ENCODE measurements at regions of chr3 and their contacts with region 1.

Region 1: GRCh38 chr3:36876181-36876936 is 68.5 kb downstream of the TRANK1 start:
- DNase-seq: peak in 4 of 9 experiments; percentile 33 to 88 (median 67)
- ATAC-seq: peak; percentile 91
- H3K4me3 ChIP-seq: peak overlapping the region; percentile 5 to 32
- H3K4me3 Mint-ChIP-seq: peak overlapping the region; percentile 73
- H3K27ac ChIP-seq: peak overlapping the region; percentile 77 to 91
- H3K27ac Mint-ChIP-seq: peak overlapping the region; percentile 97
- H3K4me1 ChIP-seq: peaks cover 42% of the 10 kb centered on the region
- H3K4me1 Mint-ChIP-seq: peaks cover 55% of the 10 kb centered on the region
- H3K27me3 ChIP-seq: no peaks in the 10 kb centered on the region
- H3K27me3 Mint-ChIP-seq: no peaks in the 10 kb centered on the region
- CTCF ChIP-seq: no peak

Region 2: GRCh38 chr3:36993326-36994283 is 117.2 kb after region 1 on chr3 and contains the start of gene MLH1:
- CTCF ChIA-PET with region 1: interaction called, 3 read pairs
- POLR2A ChIA-PET with region 1: interaction called, 11 read pairs
- intact Hi-C with region 1: loop called (anchors 5 kb)
- DNase-seq: peak in 8 of 9 experiments; percentile 95 to 100 (median 97)
- ATAC-seq: peak; percentile 81
- H3K4me3 ChIP-seq: peak within 1 kb of the TSS; percentile 58 to 77
- H3K4me3 Mint-ChIP-seq: no peak within 1 kb of the TSS
- H3K27ac ChIP-seq: peak within 1 kb of the TSS; percentile 89 to 99
- H3K27ac Mint-ChIP-seq: no peak within 1 kb of the TSS
- H3K4me1 ChIP-seq: peaks cover 44% of the 10 kb centered on the region
- H3K4me1 Mint-ChIP-seq: peaks cover 35% of the 10 kb centered on the region
- H3K27me3 ChIP-seq: no peaks in the 10 kb centered on the region
- H3K27me3 Mint-ChIP-seq: no peaks in the 10 kb centered on the region
- CTCF ChIP-seq: no peak
- total RNA-seq, gene MLH1: 21.4 to 23.9 TPM

Region 3: GRCh38 chr3:38574411-38575278 is 1698.3 kb after region 1 on chr3:
- CTCF ChIA-PET with region 1: no interaction called
- POLR2A ChIA-PET with region 1: no interaction called
- intact Hi-C with region 1: no loop called
- DNase-seq: peak in 1 of 9 experiments; percentile 21
- ATAC-seq: no peak
- H3K4me3 ChIP-seq: no peak overlapping the region
- H3K4me3 Mint-ChIP-seq: no peak overlapping the region
- H3K27ac ChIP-seq: no peak overlapping the region
- H3K27ac Mint-ChIP-seq: no peak overlapping the region
- H3K4me1 ChIP-seq: no peaks in the 10 kb centered on the region
- H3K4me1 Mint-ChIP-seq: no peaks in the 10 kb centered on the region
- H3K27me3 ChIP-seq: no peaks in the 10 kb centered on the region
- H3K27me3 Mint-ChIP-seq: no peaks in the 10 kb centered on the region
- CTCF ChIP-seq: no peak